ENCODE measurements at regions of chr10 and their contacts with region 1.

Region 1: DNA sequence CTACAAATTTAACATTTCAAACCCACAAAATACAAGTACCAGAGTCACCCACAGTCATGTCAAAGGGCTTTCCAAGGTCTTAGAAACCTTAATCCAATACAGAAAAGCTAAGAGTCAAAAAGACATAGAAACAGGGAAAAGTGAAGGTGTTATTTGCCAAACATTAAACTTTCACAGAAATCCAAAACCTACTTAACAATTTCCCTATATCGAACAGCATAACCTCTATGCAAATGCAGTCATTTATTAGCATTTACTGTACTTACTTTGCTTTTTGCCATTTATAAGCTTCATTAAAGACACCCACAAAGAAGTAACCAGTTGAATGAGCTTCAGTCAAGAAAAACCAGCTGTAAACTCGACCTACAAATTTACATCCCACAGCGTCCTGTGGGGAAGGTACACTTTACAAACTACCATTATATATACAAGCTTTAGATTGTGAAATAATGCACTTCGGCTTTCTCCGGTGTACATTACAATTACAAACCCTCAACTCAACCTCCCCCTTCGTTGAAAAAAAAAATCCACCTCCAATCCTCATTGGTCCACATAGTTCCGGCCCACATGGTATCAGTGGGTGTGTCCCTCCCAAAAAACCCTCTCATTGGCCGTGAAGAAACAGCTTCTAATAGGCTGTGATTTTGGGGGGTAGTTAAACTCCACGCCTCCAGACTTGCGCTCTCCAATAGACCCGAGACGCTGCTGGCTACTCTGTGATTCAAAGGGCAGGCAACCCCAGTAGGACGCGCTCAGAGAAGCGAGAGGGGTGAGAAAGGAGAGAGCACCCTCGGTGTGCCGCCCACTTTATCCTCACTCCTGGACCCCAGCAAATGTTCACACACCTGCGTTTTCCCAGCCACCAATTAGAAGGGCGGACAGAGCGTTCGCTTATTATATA is 1.4 kb downstream of the PANK1 start:
- DNase-seq: peak; percentile 92 to 95
- H3K4me3 ChIP-seq: peak overlapping the region; percentile 83
- H3K4me3 Mint-ChIP-seq: no peak overlapping the region
- H3K27ac Mint-ChIP-seq: no peak overlapping the region
- H3K4me1 ChIP-seq: peaks cover 25% of the 10 kb centered on the region
- H3K4me1 Mint-ChIP-seq: peaks cover 16% of the 10 kb centered on the region
- H3K27me3 ChIP-seq: no peaks in the 10 kb centered on the region
- H3K27me3 Mint-ChIP-seq: no peaks in the 10 kb centered on the region
- CTCF ChIP-seq: no peak

Region 2: GRCh38 chr10:89466599-89467035 is 177.1 kb before region 1 on chr10:
- CTCF ChIA-PET with region 1: no interaction called
- POLR2A ChIA-PET with region 1: no interaction called
- intact Hi-C with region 1: loop called (anchors 10 kb)
- DNase-seq: peak; percentile 37 to 40
- H3K4me3 ChIP-seq: no peak overlapping the region
- H3K4me3 Mint-ChIP-seq: no peak overlapping the region
- H3K27ac Mint-ChIP-seq: no peak overlapping the region
- H3K4me1 ChIP-seq: 0 out of 2 replicates have a peak, but pooled peaks cover 10% of the 10 kb centered on the region
- H3K4me1 Mint-ChIP-seq: peaks cover 6% of the 10 kb centered on the region
- H3K27me3 ChIP-seq: no peaks in the 10 kb centered on the region; the same call in 1 of the 2 replicates
- H3K27me3 Mint-ChIP-seq: no peaks in the 10 kb centered on the region
- CTCF ChIP-seq: peak in 1 of 2 experiments; percentile 72

Region 3: GRCh38 chr10:89609833-89610346 is 33.8 kb before region 1 on chr10:
- CTCF ChIA-PET with region 1: interaction called, 3 read pairs
- POLR2A ChIA-PET with region 1: interaction called, 8 read pairs
- intact Hi-C with region 1: loop called (anchors 1 kb)
- DNase-seq: peak; percentile 52 to 66
- H3K4me3 ChIP-seq: no peak overlapping the region
- H3K4me3 Mint-ChIP-seq: no peak overlapping the region
- H3K27ac Mint-ChIP-seq: peak overlapping the region; percentile 63
- H3K4me1 ChIP-seq: peaks cover 18% of the 10 kb centered on the region
- H3K4me1 Mint-ChIP-seq: no peaks in the 10 kb centered on the region
- H3K27me3 ChIP-seq: no peaks in the 10 kb centered on the region
- H3K27me3 Mint-ChIP-seq: no peaks in the 10 kb centered on the region
- CTCF ChIP-seq: peak in 1 of 2 experiments; percentile 15

Region 4: DNA sequence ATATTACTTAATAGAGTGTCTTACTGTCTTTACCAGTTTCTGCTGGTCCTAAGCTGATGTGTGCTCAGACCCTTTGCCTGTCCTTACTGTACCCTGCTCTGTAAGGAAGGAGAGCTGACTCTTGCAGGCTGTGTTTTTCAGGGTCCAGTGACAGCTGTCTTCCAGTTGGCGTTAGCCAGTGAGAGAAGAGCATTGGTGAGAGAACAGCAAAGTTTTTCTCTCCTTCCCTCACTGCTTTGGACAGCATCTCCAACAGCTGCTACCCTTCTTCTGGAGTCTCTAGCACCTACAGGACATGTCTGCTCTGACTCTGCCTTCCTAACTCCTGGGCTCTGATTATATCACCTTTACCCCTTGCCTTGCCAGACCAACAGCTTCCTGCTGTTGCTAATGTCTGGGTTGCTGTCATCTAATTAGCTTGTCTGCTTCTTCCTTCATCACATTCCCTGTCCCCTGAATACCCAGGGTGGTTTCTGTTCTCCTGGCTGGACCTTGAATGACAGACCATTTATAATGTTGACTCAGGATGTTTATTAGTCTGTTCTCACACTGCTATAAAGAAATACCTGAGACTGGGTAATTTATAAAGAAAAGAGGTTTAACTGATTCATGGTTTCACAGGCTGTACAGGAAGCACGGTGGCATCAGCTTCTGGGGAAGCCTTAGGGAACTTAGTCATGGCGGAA is 24.8 kb after region 1 on chr10:
- CTCF ChIA-PET with region 1: interaction called, 5 read pairs
- POLR2A ChIA-PET with region 1: interaction called, 3 read pairs
- intact Hi-C with region 1: loop called (anchors 2 kb)
- DNase-seq: peak in 1 of 2 experiments; percentile 20
- H3K4me3 ChIP-seq: no peak overlapping the region
- H3K4me3 Mint-ChIP-seq: no peak overlapping the region
- H3K27ac Mint-ChIP-seq: no peak overlapping the region
- H3K4me1 ChIP-seq: peaks cover 5% of the 10 kb centered on the region; the same call in 1 of the 2 replicates
- H3K4me1 Mint-ChIP-seq: no peaks in the 10 kb centered on the region
- H3K27me3 ChIP-seq: no peaks in the 10 kb centered on the region
- H3K27me3 Mint-ChIP-seq: no peaks in the 10 kb centered on the region
- CTCF ChIP-seq: no peak

Measured in Caco-2 (cell line).